Activated CD4-positive, alpha-beta T cell treated with anti-CD3 and anti-CD28 coated beads for 36 hours (primary cell): ENCODE measurements at regions of chr11 and their contacts with region 1.

Region 1: GRCh38 chr11:75814686-75815344 is at the start of gene UVRAG:
- DNase-seq: peak; percentile 98
- ATAC-seq: peak; percentile 93
- H3K4me3 Mint-ChIP-seq: no peak within 1 kb of the TSS
- H3K27ac Mint-ChIP-seq: peak within 1 kb of the TSS; percentile 80
- H3K4me1 Mint-ChIP-seq: peaks cover 16% of the 10 kb centered on the region
- H3K27me3 Mint-ChIP-seq: no peaks in the 10 kb centered on the region
- total RNA-seq, gene UVRAG: 11.4 to 13.4 TPM

Region 2: DNA sequence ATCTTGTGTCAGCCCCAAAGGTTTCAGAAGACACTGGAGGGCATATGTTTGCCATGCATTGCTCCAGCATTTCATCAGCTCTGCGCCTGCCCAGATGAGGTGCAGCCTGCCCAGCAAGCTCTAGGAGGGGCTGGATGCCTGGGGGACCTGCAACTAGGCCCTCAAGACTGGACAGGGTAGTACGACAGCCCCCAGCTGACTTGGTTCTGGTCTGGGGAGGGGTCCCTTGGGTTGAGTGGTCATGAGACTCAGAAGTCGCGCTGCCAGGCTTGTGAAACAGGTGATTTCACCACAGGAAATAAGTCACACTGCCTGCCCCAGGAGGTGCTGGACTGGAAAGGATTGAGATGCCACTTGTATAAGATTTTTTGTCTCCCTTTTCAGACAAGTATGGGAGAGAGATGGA is 550.9 kb before region 1 on chr11:
- CTCF ChIA-PET with region 1: no interaction called
- POLR2A ChIA-PET with region 1: no interaction called
- intact Hi-C with region 1: no loop called
- DNase-seq: peak; percentile 55
- ATAC-seq: peak; percentile 68
- H3K4me3 Mint-ChIP-seq: no peak overlapping the region
- H3K27ac Mint-ChIP-seq: peak overlapping the region; percentile 4
- H3K4me1 Mint-ChIP-seq: peaks cover 41% of the 10 kb centered on the region
- H3K27me3 Mint-ChIP-seq: no peaks in the 10 kb centered on the region

Region 3: DNA sequence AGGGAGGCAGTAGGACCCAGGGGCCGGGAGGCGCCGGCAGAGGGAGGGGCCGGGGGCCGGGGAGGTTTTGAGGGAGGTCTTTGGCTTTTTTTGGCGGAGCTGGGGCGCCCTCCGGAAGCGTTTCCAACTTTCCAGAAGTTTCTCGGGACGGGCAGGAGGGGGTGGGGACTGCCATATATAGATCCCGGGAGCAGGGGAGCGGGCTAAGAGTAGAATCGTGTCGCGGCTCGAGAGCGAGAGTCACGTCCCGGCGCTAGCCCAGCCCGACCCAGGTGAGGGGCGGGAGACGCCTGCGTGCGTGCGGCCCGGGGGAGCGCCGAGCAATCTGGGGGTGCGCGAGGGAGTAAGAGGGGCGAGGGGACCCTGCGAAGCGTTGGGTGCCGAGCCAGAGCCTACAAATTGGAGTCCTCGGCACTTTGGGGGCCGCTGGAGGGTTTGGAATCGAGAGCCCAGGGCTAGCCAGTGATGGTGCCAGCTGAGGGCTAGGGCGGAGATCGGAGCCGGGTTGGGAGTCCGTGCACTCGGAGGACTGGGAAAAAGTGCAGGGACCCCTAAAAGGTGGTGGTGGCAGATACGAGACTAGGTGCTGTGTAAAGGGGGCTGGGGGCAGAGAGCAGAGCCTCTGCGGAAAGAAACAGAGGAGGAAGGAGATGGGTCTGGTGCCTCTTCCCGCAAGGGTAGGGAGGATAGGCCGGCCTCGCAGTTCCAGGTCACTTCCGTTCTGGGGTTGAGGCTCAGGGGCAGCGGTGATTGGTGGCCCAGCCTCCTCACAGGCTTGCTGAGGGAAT is 252.6 kb before region 1 on chr11 and contains the start of gene SERPINH1:
- CTCF ChIA-PET with region 1: no interaction called
- POLR2A ChIA-PET with region 1: no interaction called
- intact Hi-C with region 1: loop called in 1 of 2 experiments (anchors 1 kb)
- DNase-seq: peak; percentile 88
- ATAC-seq: peak; percentile 93
- H3K4me3 Mint-ChIP-seq: peak within 1 kb of the TSS; percentile 99
- H3K27ac Mint-ChIP-seq: peak within 1 kb of the TSS; percentile 98
- H3K4me1 Mint-ChIP-seq: peaks cover 28% of the 10 kb centered on the region
- H3K27me3 Mint-ChIP-seq: no peaks in the 10 kb centered on the region
- total RNA-seq, gene SERPINH1: 20.3 to 23.1 TPM

Region 4: GRCh38 chr11:75582895-75583717 is 231.7 kb before region 1 on chr11:
- CTCF ChIA-PET with region 1: no interaction called
- POLR2A ChIA-PET with region 1: no interaction called
- intact Hi-C with region 1: loop called in 1 of 2 experiments (anchors 2 kb)
- DNase-seq: peak; percentile 79
- ATAC-seq: peak; percentile 94
- H3K4me3 Mint-ChIP-seq: peak overlapping the region; percentile 75
- H3K27ac Mint-ChIP-seq: peak overlapping the region; percentile 83
- H3K4me1 Mint-ChIP-seq: peaks cover 13% of the 10 kb centered on the region
- H3K27me3 Mint-ChIP-seq: no peaks in the 10 kb centered on the region

Region 5: DNA sequence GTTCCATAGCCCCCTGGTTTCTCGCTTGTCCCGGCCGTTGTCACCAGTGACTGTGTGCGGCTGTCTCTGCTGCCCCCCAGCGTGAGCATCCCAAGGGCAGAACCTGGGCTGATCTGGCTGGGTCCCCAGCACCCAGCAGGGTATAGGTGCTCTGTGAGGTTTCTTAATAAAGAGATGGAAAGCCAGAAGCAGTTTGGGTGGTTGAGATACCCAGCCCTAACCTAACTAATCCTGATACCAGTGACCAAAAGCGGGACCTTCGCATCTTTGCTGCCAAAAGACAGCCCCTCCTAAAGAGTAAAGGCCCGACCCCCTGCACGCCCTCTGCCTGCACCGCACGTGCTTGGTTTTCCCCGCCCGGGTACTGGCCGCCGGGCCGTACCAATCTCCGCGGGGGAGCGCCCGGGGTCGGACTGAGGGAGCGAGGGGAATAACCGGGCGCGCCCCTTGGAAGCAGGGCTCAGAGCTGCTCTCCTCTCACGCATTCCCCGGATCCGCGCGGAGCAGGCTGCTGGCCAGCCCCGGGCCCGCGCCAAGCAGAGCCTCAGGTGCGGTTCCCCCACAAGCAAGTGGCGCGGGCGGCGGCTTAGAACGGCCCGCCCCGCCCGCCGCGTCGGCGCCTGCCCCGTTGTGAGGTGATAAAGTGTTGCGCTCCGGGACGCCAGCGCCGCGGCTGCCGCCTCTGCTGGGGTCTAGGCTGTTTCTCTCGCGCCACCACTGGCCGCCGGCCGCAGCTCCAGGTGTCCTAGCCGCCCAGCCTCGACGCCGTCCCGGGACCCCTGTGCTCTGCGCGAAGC is 46.5 kb before region 1 on chr11 and contains the start of gene DGAT2:
- CTCF ChIA-PET with region 1: no interaction called
- POLR2A ChIA-PET with region 1: no interaction called
- intact Hi-C with region 1: loop called in 1 of 2 experiments (anchors 1 kb)
- DNase-seq: peak; percentile 82
- ATAC-seq: peak; percentile 86
- H3K4me3 Mint-ChIP-seq: peak within 1 kb of the TSS; percentile 61
- H3K27ac Mint-ChIP-seq: peak within 1 kb of the TSS; percentile 48
- H3K4me1 Mint-ChIP-seq: peaks cover 30% of the 10 kb centered on the region
- H3K27me3 Mint-ChIP-seq: peaks cover 28% of the 10 kb centered on the region
- total RNA-seq, gene DGAT2: 1.4 to 1.5 TPM

Region 6: DNA sequence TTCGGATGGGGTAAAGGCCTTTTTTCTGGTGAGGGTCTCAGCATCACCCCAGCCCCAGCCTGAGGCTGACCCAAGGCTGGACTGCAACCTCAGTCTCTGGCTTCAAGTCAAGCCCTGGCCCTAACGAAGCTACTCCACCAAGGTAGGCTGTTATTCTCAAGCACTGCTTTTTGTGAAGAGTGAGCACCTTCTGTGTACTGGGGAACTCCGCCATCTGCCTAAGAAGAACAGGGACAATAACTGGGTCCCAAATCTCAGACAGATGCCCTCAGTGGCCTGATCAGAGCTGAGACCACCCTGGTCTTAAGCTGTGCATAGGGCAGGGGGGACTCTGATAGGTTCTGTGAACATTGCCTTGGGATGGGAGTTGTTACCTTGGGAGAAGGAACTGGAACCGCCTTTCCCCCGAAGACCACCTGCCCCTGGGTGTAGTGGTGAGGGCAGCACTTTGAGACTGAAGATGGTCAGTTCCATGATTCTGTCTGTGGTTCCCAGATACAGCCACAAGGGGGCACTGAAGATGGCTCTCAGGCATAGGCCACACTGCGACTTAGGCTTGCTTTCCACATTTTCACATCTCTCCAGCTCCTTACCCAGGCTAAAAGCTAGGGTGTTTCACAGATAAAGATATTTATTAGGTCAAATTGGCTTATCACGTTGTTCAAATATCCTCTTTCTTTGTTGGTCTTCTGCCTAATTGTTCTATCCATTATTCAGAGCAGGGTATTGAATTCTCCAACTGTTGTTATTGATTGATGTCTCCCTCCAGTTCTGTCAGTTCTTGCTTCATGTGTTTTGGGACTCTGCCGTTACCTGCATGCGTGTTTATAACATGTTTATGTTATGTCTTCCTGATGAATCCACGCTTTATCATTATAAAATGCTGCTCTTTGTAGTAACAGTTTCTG is 11.6 kb before region 1 on chr11:
- CTCF ChIA-PET with region 1: interaction called, 30 read pairs
- POLR2A ChIA-PET with region 1: no interaction called
- intact Hi-C with region 1: no loop called
- DNase-seq: peak; percentile 84
- ATAC-seq: peak; percentile 92
- H3K4me3 Mint-ChIP-seq: no peak overlapping the region
- H3K27ac Mint-ChIP-seq: no peak overlapping the region
- H3K4me1 Mint-ChIP-seq: peaks cover 10% of the 10 kb centered on the region
- H3K27me3 Mint-ChIP-seq: no peaks in the 10 kb centered on the region